Activated CD8-positive, alpha-beta T cell treated with anti-CD3 and anti-CD28 coated beads, Interleukin-2, amount 10 ng/mL, durations not matched to agents 7 days and 5 days (primary cell): ENCODE measurements at regions of chr6 and their contacts with region 1.

Region 1: DNA sequence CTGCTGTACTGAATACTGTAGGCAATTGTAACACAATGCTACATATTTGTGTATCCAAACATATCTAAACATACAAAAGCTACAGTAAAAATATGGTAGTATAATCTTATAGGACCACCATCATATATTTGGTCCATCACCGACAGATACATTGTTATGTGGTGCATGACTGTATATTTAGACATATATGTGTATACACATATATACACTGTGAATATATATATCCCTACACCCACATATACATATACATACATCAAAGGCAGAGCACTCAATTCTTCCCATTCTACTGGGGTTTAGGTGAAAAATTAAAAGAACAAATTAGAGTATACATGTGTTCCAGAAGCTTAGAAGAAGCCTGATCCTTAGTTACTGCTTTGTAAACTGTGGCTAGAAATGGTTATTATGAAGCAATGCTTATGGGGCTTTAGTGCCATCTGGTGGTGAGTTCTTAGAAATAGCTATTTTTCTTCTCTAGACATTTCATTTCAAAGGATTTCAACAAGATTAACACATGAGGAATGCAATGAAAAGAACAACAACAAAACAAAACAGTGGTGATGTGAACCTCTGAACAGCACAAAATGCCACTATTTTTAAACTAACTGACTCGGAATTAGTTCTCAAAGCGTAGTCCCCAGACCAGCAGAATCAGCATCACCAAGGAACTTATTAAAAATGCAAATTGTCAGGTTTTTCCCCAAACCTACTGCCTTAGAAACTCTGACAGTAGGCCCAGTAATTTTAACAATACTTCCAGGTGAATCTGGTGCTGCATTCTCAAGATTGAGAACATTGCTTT is 38.0 kb downstream of the PKHD1 start:
- DNase-seq: peak; percentile 34
- ATAC-seq: no peak
- H3K4me3 Mint-ChIP-seq: no peak overlapping the region
- H3K27ac Mint-ChIP-seq: no peak overlapping the region
- H3K4me1 Mint-ChIP-seq: no peaks in the 10 kb centered on the region
- H3K27me3 Mint-ChIP-seq: peaks cover 12% of the 10 kb centered on the region

Region 2: GRCh38 chr6:52020945-52021570 is 28.4 kb before region 1 on chr6:
- CTCF ChIA-PET with region 1: interaction called, 19 read pairs
- POLR2A ChIA-PET with region 1: no interaction called
- DNase-seq: no peak
- ATAC-seq: no peak
- H3K4me3 Mint-ChIP-seq: no peak overlapping the region
- H3K27ac Mint-ChIP-seq: no peak overlapping the region
- H3K4me1 Mint-ChIP-seq: no peaks in the 10 kb centered on the region
- H3K27me3 Mint-ChIP-seq: peaks cover 7% of the 10 kb centered on the region

Region 3: GRCh38 chr6:52063584-52064344 is 14.3 kb after region 1 on chr6:
- CTCF ChIA-PET with region 1: interaction called, 24 read pairs
- POLR2A ChIA-PET with region 1: no interaction called
- DNase-seq: peak; percentile 84
- ATAC-seq: peak; percentile 99
- H3K4me3 Mint-ChIP-seq: peak overlapping the region; percentile 47
- H3K27ac Mint-ChIP-seq: peak overlapping the region; percentile 88
- H3K4me1 Mint-ChIP-seq: peaks cover 12% of the 10 kb centered on the region
- H3K27me3 Mint-ChIP-seq: peaks cover 27% of the 10 kb centered on the region

Region 4: GRCh38 chr6:52115891-52116604 is 66.6 kb after region 1 on chr6:
- CTCF ChIA-PET with region 1: no interaction called
- POLR2A ChIA-PET with region 1: no interaction called
- DNase-seq: no peak
- ATAC-seq: no peak
- H3K4me3 Mint-ChIP-seq: no peak overlapping the region
- H3K27ac Mint-ChIP-seq: no peak overlapping the region
- H3K4me1 Mint-ChIP-seq: no peaks in the 10 kb centered on the region
- H3K27me3 Mint-ChIP-seq: peaks cover 10% of the 10 kb centered on the region